ENCODE measurements at regions of chr22 and their contacts with region 1.

Region 1: DNA sequence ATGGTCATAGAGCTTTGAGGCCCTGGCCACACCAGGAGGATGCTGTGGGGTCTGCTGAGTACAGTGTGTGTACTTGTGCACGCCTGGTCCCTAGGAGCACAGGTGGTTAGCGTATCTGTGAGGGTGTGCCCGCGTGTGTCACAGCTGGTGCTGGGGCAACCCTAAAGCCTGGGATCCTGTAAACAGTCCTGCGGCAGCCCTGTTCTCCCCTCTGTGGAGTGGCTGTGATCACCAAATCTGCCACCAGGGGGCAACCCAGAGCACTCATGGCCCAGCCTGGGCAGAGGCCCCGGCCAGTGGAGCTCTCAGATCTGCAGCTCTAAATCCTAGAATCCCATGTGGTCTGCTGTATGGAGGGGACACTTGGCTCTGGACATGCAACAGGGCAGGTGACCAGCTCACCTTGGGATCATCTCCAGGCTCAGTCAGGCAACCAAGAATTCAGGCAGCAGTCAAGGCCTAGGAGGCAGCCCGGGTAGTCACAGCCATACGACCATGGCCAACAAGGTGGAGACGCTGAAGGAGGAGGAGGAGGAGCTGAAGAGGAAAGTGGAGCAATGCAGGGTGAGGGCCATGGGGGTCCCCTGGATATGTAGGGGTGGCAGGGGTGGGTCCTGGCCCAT is 3.9 kb downstream of the SH3BP1 start:
- DNase-seq: peak; percentile 50 to 90 (median 80)
- ATAC-seq: peak; percentile 50 to 64 (median 58)
- H3K4me3 ChIP-seq: no peak overlapping the region
- H3K4me3 Mint-ChIP-seq: peak overlapping the region; percentile 36 to 94 (median 47)
- H3K27ac ChIP-seq: no peak overlapping the region
- H3K27ac Mint-ChIP-seq: peak overlapping the region; percentile 71 to 89
- H3K4me1 ChIP-seq: peaks cover 12 to 60% of the 10 kb centered on the region in 2 experiments
- H3K4me1 Mint-ChIP-seq: peaks cover 31 to 46% (median 37%) of the 10 kb centered on the region in 3 donors
- H3K27me3 ChIP-seq: no peaks in the 10 kb centered on the region
- H3K27me3 Mint-ChIP-seq: no peaks in the 10 kb centered on the region

Region 2: GRCh38 chr22:37627545-37627944 is 15.8 kb before region 1 on chr22:
- CTCF ChIA-PET with region 1: interaction called, 6 to 12 read pairs
- POLR2A ChIA-PET with region 1: interaction called in 1 of 2 experiments, 6 read pairs
- DNase-seq: peak; percentile 44 to 78 (median 59)
- ATAC-seq: peak; percentile 79 to 87 (median 86)
- H3K4me3 ChIP-seq: peak overlapping the region in 1 of 2 donors; percentile 20
- H3K4me3 Mint-ChIP-seq: peak overlapping the region; percentile 43 to 78 (median 46)
- H3K27ac ChIP-seq: peak overlapping the region; percentile 77
- H3K27ac Mint-ChIP-seq: peak overlapping the region; percentile 93 to 95
- H3K4me1 ChIP-seq: peaks cover 28 to 94% of the 10 kb centered on the region in 2 experiments
- H3K4me1 Mint-ChIP-seq: peaks cover 59 to 77% (median 65%) of the 10 kb centered on the region in 3 donors
- H3K27me3 ChIP-seq: no peaks in the 10 kb centered on the region
- H3K27me3 Mint-ChIP-seq: no peaks in the 10 kb centered on the region

Region 3: GRCh38 chr22:37658133-37659065 is 15.1 kb after region 1 on chr22 and contains the start of gene PDXP:
- CTCF ChIA-PET with region 1: interaction called, 4 to 39 read pairs
- POLR2A ChIA-PET with region 1: interaction called in 1 of 2 experiments, 3 read pairs
- DNase-seq: peak; percentile 92 to 99 (median 96)
- ATAC-seq: peak; percentile 92 to 94 (median 93)
- H3K4me3 ChIP-seq: peak within 1 kb of the TSS; percentile 54 to 84
- H3K4me3 Mint-ChIP-seq: peak within 1 kb of the TSS; percentile 81 to 85 (median 83)
- H3K27ac ChIP-seq: peak within 1 kb of the TSS; percentile 63
- H3K27ac Mint-ChIP-seq: peak within 1 kb of the TSS; percentile 89 to 98
- H3K4me1 ChIP-seq: peaks cover 11 to 38% of the 10 kb centered on the region in 2 experiments
- H3K4me1 Mint-ChIP-seq: peaks cover 40 to 42% (median 41%) of the 10 kb centered on the region in 3 donors
- H3K27me3 ChIP-seq: no peaks in the 10 kb centered on the region
- H3K27me3 Mint-ChIP-seq: no peaks in the 10 kb centered on the region
- total RNA-seq, gene PDXP: 3.1 to 11.3 (median 10.7) TPM

Region 4: GRCh38 chr22:37676736-37677492 is 33.6 kb after region 1 on chr22:
- CTCF ChIA-PET with region 1: interaction called in 1 of 2 experiments, 31 read pairs
- POLR2A ChIA-PET with region 1: interaction called, 3 to 5 read pairs
- DNase-seq: peak; percentile 88 to 96 (median 93)
- ATAC-seq: peak; percentile 86 to 90 (median 87)
- H3K4me3 ChIP-seq: peak overlapping the region; percentile 91 to 95
- H3K4me3 Mint-ChIP-seq: peak overlapping the region; percentile 87 to 97 (median 87)
- H3K27ac ChIP-seq: peak overlapping the region; percentile 96
- H3K27ac Mint-ChIP-seq: peak overlapping the region; percentile 95 to 98
- H3K4me1 ChIP-seq: peaks cover 27 to 76% of the 10 kb centered on the region in 2 experiments
- H3K4me1 Mint-ChIP-seq: peaks cover 48 to 66% (median 57%) of the 10 kb centered on the region in 3 donors
- H3K27me3 ChIP-seq: no peaks in the 10 kb centered on the region
- H3K27me3 Mint-ChIP-seq: no peaks in the 10 kb centered on the region

Region 5: GRCh38 chr22:37686002-37686982 is 43.0 kb after region 1 on chr22 and contains the start of gene NOL12:
- CTCF ChIA-PET with region 1: interaction called, 3 to 24 read pairs
- POLR2A ChIA-PET with region 1: interaction called in 1 of 2 experiments, 3 read pairs
- DNase-seq: peak; percentile 54 to 88 (median 69)
- ATAC-seq: peak; percentile 91 to 94 (median 92)
- H3K4me3 ChIP-seq: peak within 1 kb of the TSS; percentile 76 to 99
- H3K4me3 Mint-ChIP-seq: peak within 1 kb of the TSS; percentile 93 to 96 (median 94)
- H3K27ac ChIP-seq: peak within 1 kb of the TSS; percentile 40
- H3K27ac Mint-ChIP-seq: peak within 1 kb of the TSS; percentile 92 to 95
- H3K4me1 ChIP-seq: peaks cover 11 to 42% of the 10 kb centered on the region in 2 experiments
- H3K4me1 Mint-ChIP-seq: peaks cover 32 to 33% (median 33%) of the 10 kb centered on the region in 3 donors
- H3K27me3 ChIP-seq: no peaks in the 10 kb centered on the region
- H3K27me3 Mint-ChIP-seq: no peaks in the 10 kb centered on the region
- total RNA-seq, gene NOL12: 29.2 to 52.4 (median 47.5) TPM

Region 6: DNA sequence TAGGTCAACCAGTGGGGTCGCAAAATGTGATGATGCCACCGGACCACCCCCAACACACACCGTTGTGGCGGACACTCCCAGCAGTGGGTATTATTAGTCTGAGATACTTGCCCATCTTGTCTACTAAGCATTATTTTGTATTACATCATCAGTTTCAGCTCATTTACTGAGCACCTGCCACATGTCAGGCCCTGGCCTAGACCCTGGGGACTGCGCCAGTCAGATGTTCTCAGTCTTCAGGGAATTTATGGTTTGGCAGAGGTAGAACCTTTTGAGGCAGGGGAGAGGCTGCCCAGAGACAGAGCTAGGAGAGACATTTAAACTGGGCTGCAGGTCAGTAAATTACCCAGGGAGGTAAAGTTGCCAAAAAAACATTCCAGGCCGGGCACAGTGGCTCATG is 121.3 kb after region 1 on chr22:
- CTCF ChIA-PET with region 1: interaction called in 1 of 2 experiments, 11 read pairs
- POLR2A ChIA-PET with region 1: no interaction called
- DNase-seq: no peak
- ATAC-seq: no peak
- H3K4me3 ChIP-seq: no peak overlapping the region
- H3K4me3 Mint-ChIP-seq: no peak overlapping the region
- H3K27ac ChIP-seq: no peak overlapping the region
- H3K27ac Mint-ChIP-seq: no peak overlapping the region
- H3K4me1 ChIP-seq: no peaks in the 10 kb centered on the region
- H3K4me1 Mint-ChIP-seq: no peaks in the 10 kb centered on the region
- H3K27me3 ChIP-seq: no peaks in the 10 kb centered on the region
- H3K27me3 Mint-ChIP-seq: no peaks in the 10 kb centered on the region